ENCODE measurements at regions of chr3 and their contacts with region 1.

Region 1: GRCh38 chr3:42443819-42444436 is 33.5 kb upstream of the LYZL4 start:
- DNase-seq: peak; percentile 95
- H3K4me3 ChIP-seq: no peak overlapping the region
- H3K27ac ChIP-seq: no peak overlapping the region
- H3K4me1 ChIP-seq: no peaks in the 10 kb centered on the region
- H3K27me3 ChIP-seq: peaks cover 0 to 15% (median 0%) of the 10 kb centered on the region in 4 donors
- CTCF ChIP-seq: peak in 2 of 3 experiments; percentile 95 to 96
- EP300 ChIP-seq: no peak
- POLR2A ChIP-seq: no peak

Region 2: GRCh38 chr3:41943311-41943843 is 500.6 kb before region 1 on chr3:
- intact Hi-C with region 1: no loop called
- DNase-seq: no peak
- H3K4me3 ChIP-seq: no peak overlapping the region
- H3K27ac ChIP-seq: no peak overlapping the region
- H3K4me1 ChIP-seq: no peaks in the 10 kb centered on the region
- H3K27me3 ChIP-seq: no peaks in the 10 kb centered on the region
- CTCF ChIP-seq: no peak
- EP300 ChIP-seq: no peak
- POLR2A ChIP-seq: no peak

Region 3: GRCh38 chr3:42229942-42230688 is 213.8 kb before region 1 on chr3:
- intact Hi-C with region 1: loop called (anchors 5 kb)
- DNase-seq: no peak
- H3K4me3 ChIP-seq: peak overlapping the region in 3 of 4 donors; percentile 17 to 28 (median 19)
- H3K27ac ChIP-seq: no peak overlapping the region
- H3K4me1 ChIP-seq: peaks cover 0 to 15% (median 12%) of the 10 kb centered on the region in 4 donors
- H3K27me3 ChIP-seq: peaks cover 0 to 5% (median 0%) of the 10 kb centered on the region in 4 donors
- CTCF ChIP-seq: peak; percentile 44 to 59 (median 52)
- EP300 ChIP-seq: no peak
- POLR2A ChIP-seq: no peak

Region 4: DNA sequence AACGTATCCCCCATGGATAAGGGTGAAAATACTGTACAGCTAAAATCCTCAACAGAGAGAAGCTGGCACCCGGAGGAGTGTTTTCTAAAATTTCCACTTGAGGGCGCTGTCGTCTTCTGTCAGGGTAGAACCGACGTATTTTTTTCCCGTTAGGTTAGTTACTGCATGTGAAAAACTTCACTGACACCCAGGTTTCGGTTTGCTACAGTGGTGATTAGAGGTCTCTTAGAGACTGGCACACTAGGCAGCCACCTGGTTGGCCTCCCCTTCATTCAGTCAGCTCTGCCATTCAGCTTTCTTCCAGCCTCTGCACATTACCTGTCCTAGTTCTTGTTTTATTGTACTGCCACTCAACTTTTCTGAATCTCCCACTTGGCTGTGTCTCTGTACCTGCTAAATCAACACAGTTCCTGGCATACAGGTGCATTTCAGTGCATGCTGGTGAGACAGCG is 196.3 kb before region 1 on chr3:
- intact Hi-C with region 1: loop called (anchors 1 kb)
- DNase-seq: no peak
- H3K4me3 ChIP-seq: no peak overlapping the region
- H3K27ac ChIP-seq: no peak overlapping the region
- H3K4me1 ChIP-seq: peaks cover 0 to 7% (median 0%) of the 10 kb centered on the region in 4 donors
- H3K27me3 ChIP-seq: peaks cover 0 to 7% (median 0%) of the 10 kb centered on the region in 4 donors
- CTCF ChIP-seq: peak; percentile 68 to 80 (median 77)
- EP300 ChIP-seq: no peak
- POLR2A ChIP-seq: no peak

Measured in esophagus muscularis mucosa (tissue), 4 donors.